ENCODE measurements at regions of chr6 and their contacts with region 1.

Region 1: DNA sequence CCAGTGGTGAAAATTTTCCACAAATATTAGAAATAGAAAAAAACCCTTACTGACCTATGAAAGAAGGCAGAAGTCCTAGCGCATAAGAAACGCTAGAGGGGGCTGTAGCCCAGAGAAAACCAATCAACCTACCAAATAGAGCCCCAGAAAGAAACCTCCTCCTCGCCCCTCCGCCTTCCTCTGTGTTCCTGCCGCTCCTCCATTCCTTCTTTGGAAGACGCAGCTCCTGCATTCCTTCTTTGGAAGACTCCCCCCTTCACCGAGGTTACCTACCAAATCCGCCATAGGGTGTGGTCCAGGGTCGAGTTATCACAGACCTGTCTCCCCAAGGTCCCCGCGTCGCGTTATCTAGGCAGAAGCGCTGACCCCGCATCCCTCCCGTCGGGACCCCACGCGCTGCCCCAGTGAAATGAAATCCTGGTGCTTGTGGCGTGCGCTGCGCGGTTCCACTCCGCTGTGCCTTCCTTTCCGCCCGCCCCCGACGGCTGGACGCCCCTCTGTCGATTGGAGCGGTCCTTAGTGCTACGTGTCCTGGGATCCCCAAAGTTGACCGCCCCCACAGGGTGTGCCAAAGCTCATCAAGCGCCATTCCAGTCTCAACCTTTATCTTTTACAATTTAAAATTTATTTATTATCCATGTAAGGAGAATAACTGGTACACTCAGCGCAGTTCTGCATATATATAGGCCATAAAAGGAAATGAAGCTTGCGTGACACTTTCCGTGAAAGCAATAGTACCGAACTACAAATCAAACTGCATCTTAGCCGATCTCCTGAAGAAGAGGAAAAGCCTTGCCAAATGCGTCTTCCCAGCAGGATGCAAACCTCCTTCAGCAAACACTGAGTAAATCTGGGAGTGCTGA is 13.0 kb downstream of the RPP21 start:
- DNase-seq: peak; percentile 44
- H3K4me3 ChIP-seq: peak overlapping the region; percentile 18 to 45 (median 21)
- H3K27ac ChIP-seq: peak overlapping the region; percentile 55 to 81 (median 73)
- H3K4me1 ChIP-seq: peaks cover 0 to 11% (median 3%) of the 10 kb centered on the region in 4 donors
- H3K27me3 ChIP-seq: peaks cover 83% of the 10 kb centered on the region
- CTCF ChIP-seq: peak; percentile 50 to 77 (median 74)
- EP300 ChIP-seq: no peak
- POLR2A ChIP-seq: no peak

Region 2: GRCh38 chr6:30396833-30397479 is 39.0 kb after region 1 on chr6:
- in situ Hi-C with region 1: no loop called
- intact Hi-C with region 1: loop called (anchors 5 kb)
- DNase-seq: peak; percentile 83
- H3K4me3 ChIP-seq: no peak overlapping the region
- H3K27ac ChIP-seq: no peak overlapping the region
- H3K4me1 ChIP-seq: no peaks in the 10 kb centered on the region
- H3K27me3 ChIP-seq: peaks cover 23% of the 10 kb centered on the region
- CTCF ChIP-seq: peak; percentile 77 to 89 (median 83)
- EP300 ChIP-seq: no peak
- POLR2A ChIP-seq: no peak

Measured in transverse colon (tissue), 4 donors.